A673 (cell line): ENCODE measurements at regions of chr1 and their contacts with region 1.

Region 1: GRCh38 chr1:101532377-101532776 is 295.6 kb downstream of the S1PR1 start:
- DNase-seq: peak; percentile 46
- H3K4me3 ChIP-seq: no peak overlapping the region
- H3K27ac ChIP-seq: no peak overlapping the region
- H3K4me1 ChIP-seq: peaks cover 7% of the 10 kb centered on the region
- H3K27me3 ChIP-seq: no peaks in the 10 kb centered on the region
- CTCF ChIP-seq: no peak

Region 2: GRCh38 chr1:101095576-101095975 is 436.8 kb before region 1 on chr1:
- CTCF ChIA-PET with region 1: no interaction called
- POLR2A ChIA-PET with region 1: no interaction called
- intact Hi-C with region 1: no loop called
- DNase-seq: no peak
- H3K4me3 ChIP-seq: no peak overlapping the region
- H3K27ac ChIP-seq: no peak overlapping the region
- H3K4me1 ChIP-seq: no peaks in the 10 kb centered on the region
- H3K27me3 ChIP-seq: no peaks in the 10 kb centered on the region
- CTCF ChIP-seq: no peak

Region 3: DNA sequence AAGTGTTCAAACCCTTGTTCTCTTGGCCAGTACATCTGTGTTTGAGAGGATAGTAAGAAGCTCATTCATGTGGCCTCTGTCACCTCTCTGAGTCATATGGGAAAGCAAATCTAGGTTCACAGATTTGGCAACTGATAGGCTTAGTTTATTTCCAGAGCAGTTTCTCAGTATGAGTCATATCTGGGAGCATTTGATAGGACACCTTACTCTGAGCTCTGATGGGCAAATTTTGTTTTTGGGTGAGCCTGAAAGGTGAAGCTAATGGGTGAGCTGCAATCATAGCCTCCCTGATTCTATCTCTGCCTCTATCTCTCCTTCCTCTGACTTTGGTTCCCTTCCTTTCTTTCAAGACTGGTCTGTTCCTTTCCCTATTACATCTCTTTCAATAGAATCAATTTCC is 161.1 kb before region 1 on chr1:
- CTCF ChIA-PET with region 1: no interaction called
- POLR2A ChIA-PET with region 1: no interaction called
- intact Hi-C with region 1: no loop called
- DNase-seq: no peak
- H3K4me3 ChIP-seq: no peak overlapping the region
- H3K27ac ChIP-seq: no peak overlapping the region
- H3K4me1 ChIP-seq: no peaks in the 10 kb centered on the region
- H3K27me3 ChIP-seq: no peaks in the 10 kb centered on the region
- CTCF ChIP-seq: no peak

Region 4: GRCh38 chr1:101547357-101547756 is 15.0 kb after region 1 on chr1:
- CTCF ChIA-PET with region 1: interaction called, 12 read pairs
- POLR2A ChIA-PET with region 1: no interaction called
- intact Hi-C with region 1: no loop called
- DNase-seq: no peak
- H3K4me3 ChIP-seq: no peak overlapping the region
- H3K27ac ChIP-seq: no peak overlapping the region
- H3K4me1 ChIP-seq: no peaks in the 10 kb centered on the region
- H3K27me3 ChIP-seq: no peaks in the 10 kb centered on the region
- CTCF ChIP-seq: no peak